K562 (cell line): ENCODE measurements at regions of chr11 and their contacts with region 1.

Region 1: GRCh38 chr11:118051611-118052461 is 25.0 kb upstream of the TMPRSS4 start:
- DNase-seq: no peak
- ATAC-seq: peak; percentile 4; the same call in 1 of the 3 replicates
- H3K4me3 ChIP-seq: no peak overlapping the region
- H3K27ac ChIP-seq: no peak overlapping the region
- H3K4me1 ChIP-seq: peaks cover 15% of the 10 kb centered on the region in 2 experiments
- H3K27me3 ChIP-seq: peaks cover 5 to 15% of the 10 kb centered on the region in 2 experiments; a peak in 3 of 5 replicates
- CTCF ChIP-seq: no peak
- EP300 ChIP-seq: no peak
- POLR2A ChIP-seq: no peak
- RAD21 ChIP-seq: no peak

Region 2: GRCh38 chr11:117807482-117808327 is 244.1 kb before region 1 on chr11:
- CTCF ChIA-PET with region 1: interaction called, 7 read pairs
- POLR2A ChIA-PET with region 1: no interaction called
- in situ Hi-C with region 1: no loop called
- intact Hi-C with region 1: loop called (anchors 1 kb)
- DNase-seq: peak; percentile 78 to 82 (median 80)
- ATAC-seq: peak; percentile 72
- H3K4me3 ChIP-seq: no peak overlapping the region
- H3K27ac ChIP-seq: no peak overlapping the region
- H3K4me1 ChIP-seq: peaks cover 13 to 14% of the 10 kb centered on the region in 2 experiments; a peak in 4 of 5 replicates
- H3K27me3 ChIP-seq: peaks cover 0 to 29% of the 10 kb centered on the region in 2 experiments; a peak in 3 of 5 replicates
- CTCF ChIP-seq: peak; percentile 84 to 93 (median 88)
- EP300 ChIP-seq: no peak
- POLR2A ChIP-seq: no peak
- RAD21 ChIP-seq: peak; percentile 66 to 85

Region 3: GRCh38 chr11:117843666-117844484 is 208.0 kb before region 1 on chr11:
- CTCF ChIA-PET with region 1: interaction called, 34 read pairs
- POLR2A ChIA-PET with region 1: no interaction called
- in situ Hi-C with region 1: no loop called
- intact Hi-C with region 1: loop called (anchors 1 kb)
- DNase-seq: peak; percentile 70 to 79 (median 74)
- ATAC-seq: peak; percentile 94
- H3K4me3 ChIP-seq: no peak overlapping the region
- H3K27ac ChIP-seq: no peak overlapping the region
- H3K4me1 ChIP-seq: no peaks in the 10 kb centered on the region
- H3K27me3 ChIP-seq: peaks cover 0 to 35% of the 10 kb centered on the region in 2 experiments; a peak in 3 of 5 replicates
- CTCF ChIP-seq: peak; percentile 86 to 95 (median 94)
- EP300 ChIP-seq: no peak
- POLR2A ChIP-seq: no peak
- RAD21 ChIP-seq: peak; percentile 91 to 95

Region 4: GRCh38 chr11:117929195-117929915 is 122.5 kb before region 1 on chr11 and contains the start of gene TMPRSS13:
- CTCF ChIA-PET with region 1: no interaction called
- POLR2A ChIA-PET with region 1: no interaction called
- in situ Hi-C with region 1: no loop called
- intact Hi-C with region 1: loop called (anchors 5 kb)
- DNase-seq: no peak
- ATAC-seq: no peak; the same call in 2 of the 3 replicates
- H3K4me3 ChIP-seq: no peak within 1 kb of the TSS
- H3K27ac ChIP-seq: no peak within 1 kb of the TSS
- H3K4me1 ChIP-seq: peaks cover 0 to 5% of the 10 kb centered on the region in 2 experiments; a peak in 1 of 5 replicates
- H3K27me3 ChIP-seq: peaks cover 14 to 20% of the 10 kb centered on the region in 2 experiments; a peak in 4 of 5 replicates
- CTCF ChIP-seq: no peak
- EP300 ChIP-seq: no peak
- POLR2A ChIP-seq: no peak
- RAD21 ChIP-seq: no peak
- polyA plus RNA-seq, gene TMPRSS13: 0.11 to 0.13 TPM

Region 5: DNA sequence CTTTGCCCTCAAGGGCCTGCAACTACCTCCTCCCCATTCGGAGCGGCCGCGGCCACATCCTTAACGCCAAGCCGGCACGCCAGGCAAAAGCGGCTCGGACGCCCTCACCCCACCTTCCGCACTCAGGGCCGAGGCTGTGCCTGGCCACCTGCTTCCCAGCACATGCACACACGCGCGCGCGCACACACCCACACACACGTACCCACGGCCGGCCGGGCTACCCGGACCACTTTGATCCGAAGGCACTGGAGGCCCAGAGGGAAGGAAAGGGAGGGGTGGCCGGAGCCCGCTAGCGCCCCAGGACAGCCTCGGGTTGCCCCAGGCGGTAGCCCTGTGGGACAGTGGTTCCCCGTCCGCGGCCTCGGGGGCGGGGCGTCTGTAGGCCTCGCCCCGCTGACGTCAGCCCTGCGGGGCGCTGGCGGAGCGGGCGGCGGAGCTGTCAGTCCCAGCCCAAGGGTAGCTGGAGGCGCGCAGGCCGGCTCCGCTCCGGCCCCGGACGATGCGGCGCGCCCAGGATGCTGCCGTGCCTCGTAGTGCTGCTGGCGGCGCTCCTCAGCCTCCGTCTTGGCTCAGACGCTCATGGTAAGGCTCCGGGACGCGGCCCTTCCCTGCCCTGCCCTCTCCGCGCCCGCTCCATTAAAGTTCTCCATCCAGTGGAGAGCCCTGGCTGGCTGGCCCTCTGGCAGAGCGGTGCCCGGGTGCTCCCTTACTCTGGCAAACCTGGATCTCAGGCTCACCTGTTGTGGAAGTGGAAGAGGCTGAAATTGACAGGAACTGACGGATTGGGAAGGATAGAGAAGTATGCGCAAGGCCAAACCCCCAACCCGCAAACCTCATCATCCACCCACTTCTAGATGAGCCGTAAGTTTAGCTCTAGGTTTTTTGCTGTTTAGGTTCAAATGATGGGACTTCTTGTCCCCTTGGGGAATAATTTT is 65.6 kb before region 1 on chr11 and contains the start of gene IL10RA:
- CTCF ChIA-PET with region 1: interaction called, 3 read pairs
- POLR2A ChIA-PET with region 1: no interaction called
- in situ Hi-C with region 1: no loop called
- intact Hi-C with region 1: loop called (anchors 5 kb)
- DNase-seq: peak; percentile 90 to 97 (median 96)
- ATAC-seq: peak; percentile 99
- H3K4me3 ChIP-seq: peak within 1 kb of the TSS; percentile 59
- H3K27ac ChIP-seq: peak within 1 kb of the TSS; percentile 75
- H3K4me1 ChIP-seq: peaks cover 12 to 15% of the 10 kb centered on the region in 2 experiments; a peak in 4 of 5 replicates
- H3K27me3 ChIP-seq: no peaks in the 10 kb centered on the region; a peak in 1 of 5 replicates
- CTCF ChIP-seq: peak in 2 of 3 experiments; percentile 11 to 15; a peak in 3 of 6 replicates
- EP300 ChIP-seq: no peak
- POLR2A ChIP-seq: peak; percentile 94
- RAD21 ChIP-seq: peak in 1 of 2 experiments; percentile 6; a peak in 1 of 4 replicates
- polyA plus RNA-seq, gene IL10RA: 0.17 to 0.48 TPM

Region 6: GRCh38 chr11:118076754-118077281 is 25.0 kb after region 1 on chr11 and contains the start of gene TMPRSS4:
- CTCF ChIA-PET with region 1: no interaction called
- POLR2A ChIA-PET with region 1: no interaction called
- in situ Hi-C with region 1: no loop called
- intact Hi-C with region 1: no loop called
- DNase-seq: no peak
- ATAC-seq: no peak
- H3K4me3 ChIP-seq: no peak within 1 kb of the TSS
- H3K27ac ChIP-seq: no peak within 1 kb of the TSS
- H3K4me1 ChIP-seq: peaks cover 14 to 34% of the 10 kb centered on the region in 2 experiments; a peak in 4 of 5 replicates
- H3K27me3 ChIP-seq: peaks cover 0 to 24% of the 10 kb centered on the region in 2 experiments; a peak in 4 of 5 replicates
- CTCF ChIP-seq: no peak
- EP300 ChIP-seq: no peak
- POLR2A ChIP-seq: no peak
- RAD21 ChIP-seq: no peak
- polyA plus RNA-seq, gene TMPRSS4: 4.4 to 5.6 TPM